PC-3 (cell line): ENCODE measurements at regions of chr5 and their contacts with region 1.

Region 1: DNA sequence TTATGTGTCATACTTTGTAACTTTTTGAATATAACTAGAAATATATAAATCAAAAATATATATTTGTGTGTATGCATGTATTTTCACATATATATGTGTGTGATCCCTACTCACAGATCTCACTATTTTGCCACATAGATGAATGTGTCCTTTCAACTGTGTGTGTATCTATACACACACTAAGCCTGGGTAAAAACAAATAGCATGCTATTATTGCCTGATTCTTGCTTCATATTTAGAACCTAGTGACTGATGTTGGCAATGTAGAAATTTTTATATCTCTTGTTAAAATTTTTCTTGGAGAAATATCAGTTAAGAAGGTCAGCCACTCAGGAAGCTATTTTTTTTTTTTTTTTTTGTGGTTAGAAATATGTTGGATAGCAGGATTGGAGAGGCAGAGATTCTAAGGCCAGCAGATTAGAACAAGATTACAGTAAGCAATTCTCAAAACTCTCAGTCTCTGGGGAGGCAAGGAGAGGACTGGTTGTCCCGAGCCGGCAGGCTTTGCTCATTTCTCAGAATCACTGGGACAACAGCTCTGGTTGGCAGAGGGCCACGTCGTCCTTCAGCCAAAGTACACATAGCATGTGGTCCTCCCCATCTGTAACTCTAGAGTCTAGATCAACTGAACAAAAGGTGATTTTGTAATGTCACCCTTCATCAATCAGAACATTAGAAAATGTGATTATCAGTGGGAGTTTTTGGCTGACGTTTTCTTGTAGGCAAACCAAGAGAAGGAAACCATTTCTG is 19.7 kb downstream of the C6 start:
- DNase-seq: peak; percentile 87
- ATAC-seq: peak; percentile 25; the same call in 1 of the 2 replicates
- H3K4me3 ChIP-seq: no peak overlapping the region
- H3K27ac ChIP-seq: no peak overlapping the region
- H3K4me1 ChIP-seq: peaks cover 24% of the 10 kb centered on the region
- H3K27me3 ChIP-seq: no peaks in the 10 kb centered on the region
- CTCF ChIP-seq: no peak

Region 2: GRCh38 chr5:41156739-41157138 is 36.9 kb before region 1 on chr5:
- CTCF ChIA-PET with region 1: no interaction called
- POLR2A ChIA-PET with region 1: no interaction called
- intact Hi-C with region 1: loop called (anchors 2 kb)
- DNase-seq: peak; percentile 96
- ATAC-seq: peak; percentile 98
- H3K4me3 ChIP-seq: no peak overlapping the region
- H3K27ac ChIP-seq: peak overlapping the region; percentile 71
- H3K4me1 ChIP-seq: peaks cover 25% of the 10 kb centered on the region
- H3K27me3 ChIP-seq: no peaks in the 10 kb centered on the region
- CTCF ChIP-seq: no peak

Region 3: GRCh38 chr5:41305056-41305455 is 111.4 kb after region 1 on chr5:
- CTCF ChIA-PET with region 1: no interaction called
- POLR2A ChIA-PET with region 1: interaction called, 11 read pairs
- intact Hi-C with region 1: no loop called
- DNase-seq: no peak
- ATAC-seq: no peak
- H3K4me3 ChIP-seq: no peak overlapping the region
- H3K27ac ChIP-seq: no peak overlapping the region
- H3K4me1 ChIP-seq: no peaks in the 10 kb centered on the region
- H3K27me3 ChIP-seq: no peaks in the 10 kb centered on the region
- CTCF ChIP-seq: no peak

Region 4: GRCh38 chr5:41346609-41347008 is 153.0 kb after region 1 on chr5:
- CTCF ChIA-PET with region 1: no interaction called
- POLR2A ChIA-PET with region 1: no interaction called
- intact Hi-C with region 1: loop called (anchors 1 kb)
- DNase-seq: peak; percentile 66
- ATAC-seq: no peak; the same call in 1 of the 2 replicates
- H3K4me3 ChIP-seq: no peak overlapping the region
- H3K27ac ChIP-seq: no peak overlapping the region
- H3K4me1 ChIP-seq: peaks cover 6% of the 10 kb centered on the region; the same call in 1 of the 2 replicates
- H3K27me3 ChIP-seq: no peaks in the 10 kb centered on the region
- CTCF ChIP-seq: peak; percentile 67

Region 5: GRCh38 chr5:41510176-41510831 is 316.7 kb after region 1 on chr5 and contains the start of gene PLCXD3:
- CTCF ChIA-PET with region 1: no interaction called
- POLR2A ChIA-PET with region 1: interaction called, 10 read pairs
- intact Hi-C with region 1: no loop called
- DNase-seq: peak; percentile 58
- ATAC-seq: peak; percentile 83
- H3K4me3 ChIP-seq: peak within 1 kb of the TSS; percentile 76
- H3K27ac ChIP-seq: peak within 1 kb of the TSS; percentile 77; the same call in 1 of the 2 replicates
- H3K4me1 ChIP-seq: peaks cover 49% of the 10 kb centered on the region
- H3K27me3 ChIP-seq: no peaks in the 10 kb centered on the region
- CTCF ChIP-seq: no peak
- total RNA-seq, gene PLCXD3: 5.0 TPM in 2 replicates